Mucosa of descending colon (tissue), 3 donors: ENCODE measurements at regions of chr14 and their contacts with region 1.

Region 1: GRCh38 chr14:56339855-56340701 is 221.9 kb downstream of the PELI2 start:
- DNase-seq: peak; percentile 59 to 86 (median 73)
- ATAC-seq: peak; percentile 91
- H3K4me3 ChIP-seq: no peak overlapping the region
- H3K4me1 ChIP-seq: no peaks in the 10 kb centered on the region
- CTCF ChIP-seq: peak; percentile 52

Region 2: DNA sequence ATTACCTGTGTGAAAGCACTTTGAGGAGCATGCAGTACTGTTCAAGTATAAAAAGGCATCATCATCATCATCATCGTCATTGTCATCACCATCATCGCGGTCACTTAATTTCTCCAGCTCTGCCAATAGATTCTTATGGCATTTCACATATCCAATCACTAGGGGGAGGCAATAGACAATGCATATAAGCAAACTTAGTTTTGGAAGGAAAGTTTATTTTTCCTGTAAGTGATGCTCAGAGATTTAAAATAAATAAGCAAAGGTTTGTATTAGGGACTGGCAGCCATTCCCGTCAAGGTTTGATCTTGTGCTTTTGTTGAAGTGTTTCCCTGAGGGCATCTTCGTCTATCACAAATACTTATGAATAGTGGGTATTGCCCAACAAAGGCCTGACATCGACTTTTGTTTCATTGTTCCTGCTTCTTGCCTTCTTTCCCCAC is 632.7 kb before region 1 on chr14:
- intact Hi-C with region 1: loop called in 1 of 2 experiments (anchors 10 kb)
- DNase-seq: no peak
- ATAC-seq: peak; percentile 56
- H3K4me3 ChIP-seq: no peak overlapping the region
- H3K4me1 ChIP-seq: no peaks in the 10 kb centered on the region
- CTCF ChIP-seq: no peak

Region 3: DNA sequence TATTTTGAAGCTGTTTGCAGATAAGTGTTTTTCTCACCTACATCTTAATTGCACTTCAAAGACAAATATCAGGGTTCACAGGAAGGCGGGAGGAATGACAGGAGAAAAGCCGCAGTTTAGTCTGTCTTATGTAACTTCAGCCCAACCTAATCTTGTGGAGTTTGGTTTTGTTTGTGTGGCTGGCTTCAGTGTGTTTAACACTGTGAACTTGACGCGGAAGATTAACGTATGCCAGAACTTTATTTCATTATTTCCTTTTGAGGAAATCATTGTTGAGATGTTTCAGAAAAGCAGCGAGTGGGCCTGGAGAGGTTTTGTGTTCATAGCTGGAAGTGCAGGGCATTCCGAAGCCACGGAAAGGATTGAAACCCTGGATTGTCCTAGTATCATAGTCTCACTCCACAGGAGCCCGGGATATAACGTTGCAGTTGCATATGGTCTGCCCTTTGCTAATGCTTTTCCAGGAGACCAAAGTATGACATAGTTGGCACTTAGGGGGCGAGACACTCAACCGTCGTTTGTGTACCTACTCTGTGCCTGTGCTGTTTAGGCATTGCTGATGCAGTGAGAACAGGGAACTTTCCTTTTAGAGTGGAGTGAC is 219.9 kb before region 1 on chr14:
- intact Hi-C with region 1: loop called in 1 of 2 experiments (anchors 10 kb)
- DNase-seq: peak in 1 of 3 donors; percentile 24
- ATAC-seq: peak; percentile 21
- H3K4me3 ChIP-seq: no peak overlapping the region
- H3K4me1 ChIP-seq: peaks cover 11% of the 10 kb centered on the region
- CTCF ChIP-seq: no peak